ENCODE measurements at regions of chr3 and their contacts with region 1.

Region 1: GRCh38 chr3:48240711-48241491 is at the start of gene ZNF589:
- DNase-seq: peak; percentile 82 to 90
- H3K4me3 ChIP-seq: peak within 1 kb of the TSS; percentile 92 to 98 (median 96)
- H3K27ac ChIP-seq: peak within 1 kb of the TSS; percentile 92
- H3K4me1 ChIP-seq: peaks cover 2 to 15% (median 8%) of the 10 kb centered on the region in 4 experiments; a peak in 5 of 7 replicates
- H3K27me3 ChIP-seq: no peaks in the 10 kb centered on the region
- CTCF ChIP-seq: peak in 2 of 3 experiments; percentile 15 to 22; a peak in 2 of 4 replicates
- EP300 ChIP-seq: 0 out of 3 replicates have a peak, but pooled peaks of 1 of the 2 experiments have one; percentile 7
- POLR2A ChIP-seq: peak; percentile 89 to 97
- RAD21 ChIP-seq: no peak
- total RNA-seq, gene ZNF589: 106 and 113 TPM in 2 replicates

Region 2: GRCh38 chr3:48151058-48151806 is 89.7 kb before region 1 on chr3:
- CTCF ChIA-PET with region 1: no interaction called
- POLR2A ChIA-PET with region 1: no interaction called
- DNase-seq: peak; percentile 77 to 90
- H3K4me3 ChIP-seq: no peak overlapping the region
- H3K27ac ChIP-seq: no peak overlapping the region
- H3K4me1 ChIP-seq: no peaks in the 10 kb centered on the region; a peak in 1 of 7 replicates
- H3K27me3 ChIP-seq: no peaks in the 10 kb centered on the region
- CTCF ChIP-seq: peak; percentile 93 to 96 (median 95)
- EP300 ChIP-seq: no peak
- POLR2A ChIP-seq: no peak
- RAD21 ChIP-seq: peak; percentile 100

Region 3: GRCh38 chr3:48194446-48195071 is 46.3 kb before region 1 on chr3:
- CTCF ChIA-PET with region 1: interaction called, 25 read pairs
- POLR2A ChIA-PET with region 1: interaction called, 82 read pairs
- DNase-seq: peak; percentile 23 to 95
- H3K4me3 ChIP-seq: no peak overlapping the region
- H3K27ac ChIP-seq: no peak overlapping the region
- H3K4me1 ChIP-seq: peaks cover 2 to 11% (median 5%) of the 10 kb centered on the region in 4 experiments
- H3K27me3 ChIP-seq: no peaks in the 10 kb centered on the region
- CTCF ChIP-seq: peak; percentile 67 to 91 (median 78)
- EP300 ChIP-seq: no peak
- POLR2A ChIP-seq: no peak
- RAD21 ChIP-seq: peak; percentile 91 to 93

Region 4: GRCh38 chr3:48256557-48256956 is 15.7 kb after region 1 on chr3:
- CTCF ChIA-PET with region 1: interaction called, 11 read pairs
- POLR2A ChIA-PET with region 1: interaction called, 84 read pairs
- DNase-seq: no peak
- H3K4me3 ChIP-seq: no peak overlapping the region
- H3K27ac ChIP-seq: no peak overlapping the region; the same call in 1 of the 2 replicates
- H3K4me1 ChIP-seq: no peaks in the 10 kb centered on the region
- H3K27me3 ChIP-seq: no peaks in the 10 kb centered on the region
- CTCF ChIP-seq: no peak
- EP300 ChIP-seq: no peak
- POLR2A ChIP-seq: no peak
- RAD21 ChIP-seq: no peak

Region 5: DNA sequence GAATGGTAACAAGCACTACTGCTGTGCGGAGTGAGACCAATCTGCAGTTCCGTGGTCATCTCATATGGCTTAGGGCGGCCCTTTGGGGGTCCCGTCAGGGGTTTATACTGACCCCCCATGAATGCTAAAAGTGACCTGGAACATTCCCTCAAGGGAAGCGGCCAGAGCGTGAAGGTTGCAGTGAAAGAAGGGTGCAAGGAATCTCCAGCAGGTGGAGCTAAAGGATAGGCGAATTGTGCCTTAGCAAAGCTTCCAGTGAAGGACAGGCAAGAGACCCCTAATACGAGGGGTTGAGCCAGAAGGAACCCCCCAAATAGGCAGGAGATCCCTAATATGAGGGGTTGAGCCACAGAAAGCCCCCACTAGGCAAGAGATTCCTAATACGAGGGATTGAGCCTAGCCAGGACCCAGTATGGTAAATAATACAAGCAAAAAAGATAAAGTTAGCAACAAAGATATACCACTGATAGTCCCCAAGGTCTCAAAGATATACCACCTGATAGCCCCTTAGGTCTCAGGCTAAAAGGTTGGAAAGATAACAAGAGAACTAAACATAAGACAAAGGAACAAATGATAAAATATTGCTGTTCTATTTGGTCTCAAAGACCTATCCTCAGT is 32.8 kb after region 1 on chr3:
- CTCF ChIA-PET with region 1: interaction called, 4 read pairs
- POLR2A ChIA-PET with region 1: interaction called, 29 read pairs
- DNase-seq: peak; percentile 39 to 73
- H3K4me3 ChIP-seq: no peak overlapping the region
- H3K27ac ChIP-seq: no peak overlapping the region
- H3K4me1 ChIP-seq: peaks cover 0 to 26% (median 18%) of the 10 kb centered on the region in 4 experiments; a peak in 5 of 7 replicates
- H3K27me3 ChIP-seq: no peaks in the 10 kb centered on the region
- CTCF ChIP-seq: peak; percentile 63 to 81 (median 77)
- EP300 ChIP-seq: no peak
- POLR2A ChIP-seq: no peak; a peak in 1 of 3 replicates
- RAD21 ChIP-seq: peak; percentile 88 to 91

Region 6: DNA sequence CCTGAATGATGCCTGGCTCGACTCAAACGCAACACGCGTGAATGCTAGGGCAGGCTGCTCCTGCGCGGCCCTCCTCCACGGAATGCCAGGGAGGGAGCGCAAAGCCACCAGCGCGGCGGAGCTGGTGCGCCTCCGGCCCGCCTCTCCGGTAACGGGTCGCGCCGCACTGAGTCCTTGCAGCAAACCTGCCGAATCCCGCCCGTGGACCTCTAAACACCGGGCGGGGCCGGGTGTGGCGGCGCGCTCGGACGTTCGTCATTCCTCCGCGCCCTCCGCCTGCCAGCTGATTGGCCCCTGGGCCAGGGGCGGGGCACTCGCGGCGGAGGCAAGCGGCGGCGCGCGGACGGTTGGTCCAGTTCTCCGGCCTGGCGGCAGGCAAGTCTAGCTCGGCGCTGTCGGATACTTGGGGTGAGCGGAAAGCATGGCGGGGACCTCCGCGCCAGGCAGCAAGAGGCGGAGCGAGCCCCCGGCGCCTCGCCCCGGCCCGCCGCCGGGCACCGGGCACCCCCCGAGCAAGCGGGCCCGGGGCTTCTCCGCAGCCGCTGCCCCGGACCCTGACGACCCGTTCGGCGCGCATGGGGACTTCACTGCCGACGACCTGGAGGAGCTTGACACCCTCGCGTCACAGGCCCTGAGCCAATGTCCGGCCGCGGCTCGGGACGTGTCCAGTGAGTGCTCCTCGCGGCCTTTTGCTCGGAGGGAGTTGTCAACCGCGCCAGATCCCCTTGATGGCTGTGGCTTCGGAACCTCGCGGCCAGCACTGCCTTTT is 205.7 kb after region 1 on chr3 and contains the start of gene ATRIP:
- CTCF ChIA-PET with region 1: interaction called, 3 read pairs
- POLR2A ChIA-PET with region 1: interaction called, 14 read pairs
- DNase-seq: peak in 1 of 2 experiments; percentile 95
- H3K4me3 ChIP-seq: peak within 1 kb of the TSS; percentile 80 to 98 (median 96)
- H3K27ac ChIP-seq: peak within 1 kb of the TSS; percentile 66
- H3K4me1 ChIP-seq: peaks cover 3 to 15% (median 6%) of the 10 kb centered on the region in 4 experiments; a peak in 5 of 7 replicates
- H3K27me3 ChIP-seq: no peaks in the 10 kb centered on the region
- CTCF ChIP-seq: no peak
- EP300 ChIP-seq: peak in 1 of 2 experiments; percentile 35; a peak in 1 of 3 replicates
- POLR2A ChIP-seq: peak; percentile 81 to 97
- RAD21 ChIP-seq: no peak
- total RNA-seq, gene ATRIP: 16.7 and 20.2 TPM in 2 replicates

Measured in H1 (cell line).